T-cell (primary cell): ENCODE measurements at regions of chr5 and their contacts with region 1.

Region 1: GRCh38 chr5:52181403-52181802 is 606.3 kb upstream of the ITGA1 start:
- DNase-seq: no peak
- ATAC-seq: no peak
- H3K4me3 ChIP-seq: no peak overlapping the region
- H3K4me3 Mint-ChIP-seq: no peak overlapping the region
- H3K27ac ChIP-seq: no peak overlapping the region
- H3K27ac Mint-ChIP-seq: no peak overlapping the region
- H3K4me1 ChIP-seq: no peaks in the 10 kb centered on the region
- H3K4me1 Mint-ChIP-seq: no peaks in the 10 kb centered on the region
- H3K27me3 ChIP-seq: no peaks in the 10 kb centered on the region
- H3K27me3 Mint-ChIP-seq: no peaks in the 10 kb centered on the region

Region 2: GRCh38 chr5:51995773-51996306 is 185.6 kb before region 1 on chr5:
- CTCF ChIA-PET with region 1: no interaction called
- POLR2A ChIA-PET with region 1: interaction called in 1 of 2 experiments, 10 read pairs
- DNase-seq: no peak
- ATAC-seq: no peak
- H3K4me3 ChIP-seq: no peak overlapping the region
- H3K4me3 Mint-ChIP-seq: no peak overlapping the region
- H3K27ac ChIP-seq: no peak overlapping the region
- H3K27ac Mint-ChIP-seq: no peak overlapping the region
- H3K4me1 ChIP-seq: no peaks in the 10 kb centered on the region
- H3K4me1 Mint-ChIP-seq: no peaks in the 10 kb centered on the region
- H3K27me3 ChIP-seq: no peaks in the 10 kb centered on the region
- H3K27me3 Mint-ChIP-seq: no peaks in the 10 kb centered on the region

Region 3: GRCh38 chr5:52255308-52255707 is 73.9 kb after region 1 on chr5:
- CTCF ChIA-PET with region 1: no interaction called
- POLR2A ChIA-PET with region 1: no interaction called
- DNase-seq: no peak
- ATAC-seq: no peak
- H3K4me3 ChIP-seq: no peak overlapping the region
- H3K4me3 Mint-ChIP-seq: no peak overlapping the region
- H3K27ac ChIP-seq: no peak overlapping the region
- H3K27ac Mint-ChIP-seq: no peak overlapping the region
- H3K4me1 ChIP-seq: no peaks in the 10 kb centered on the region
- H3K4me1 Mint-ChIP-seq: no peaks in the 10 kb centered on the region
- H3K27me3 ChIP-seq: no peaks in the 10 kb centered on the region
- H3K27me3 Mint-ChIP-seq: no peaks in the 10 kb centered on the region